ENCODE measurements at regions of chr1 and their contacts with region 1.

Region 1: GRCh38 chr1:92960395-92961130 is 699 bp downstream of the DIPK1A start:
- DNase-seq: peak; percentile 74 to 80
- ATAC-seq: peak; percentile 76 to 85
- H3K4me3 ChIP-seq: peak overlapping the region; percentile 97
- H3K27ac ChIP-seq: peak overlapping the region; percentile 98 to 99
- H3K4me1 ChIP-seq: peaks cover 30% of the 10 kb centered on the region
- CTCF ChIP-seq: peak; percentile 57
- EP300 ChIP-seq: no peak
- POLR2A ChIP-seq: no peak
- RAD21 ChIP-seq: peak; percentile 75 to 80

Region 2: DNA sequence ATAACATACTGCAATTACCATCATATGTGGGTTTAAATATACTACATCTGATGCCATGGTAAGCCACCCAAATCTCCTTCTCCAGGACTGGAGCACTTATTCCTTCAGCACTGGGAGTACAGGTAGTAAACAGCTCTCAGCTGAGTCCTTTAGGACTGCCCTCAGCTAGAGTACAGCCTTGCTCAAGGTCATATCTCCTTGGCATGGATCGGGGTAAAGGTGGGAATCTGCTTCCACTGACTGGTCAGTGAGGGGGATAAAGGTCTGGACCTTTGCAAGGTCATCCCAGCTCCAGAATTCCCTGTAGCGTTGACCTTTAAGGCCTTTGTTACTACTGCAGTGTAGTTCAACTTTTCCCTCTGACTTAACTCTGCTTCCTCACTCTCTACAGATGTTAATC is 90.0 kb before region 1 on chr1:
- CTCF ChIA-PET with region 1: interaction called, 14 read pairs
- POLR2A ChIA-PET with region 1: no interaction called
- DNase-seq: no peak
- ATAC-seq: no peak
- H3K4me3 ChIP-seq: no peak overlapping the region
- H3K27ac ChIP-seq: no peak overlapping the region
- H3K4me1 ChIP-seq: no peaks in the 10 kb centered on the region
- CTCF ChIP-seq: no peak
- EP300 ChIP-seq: no peak
- POLR2A ChIP-seq: no peak
- RAD21 ChIP-seq: no peak

Region 3: DNA sequence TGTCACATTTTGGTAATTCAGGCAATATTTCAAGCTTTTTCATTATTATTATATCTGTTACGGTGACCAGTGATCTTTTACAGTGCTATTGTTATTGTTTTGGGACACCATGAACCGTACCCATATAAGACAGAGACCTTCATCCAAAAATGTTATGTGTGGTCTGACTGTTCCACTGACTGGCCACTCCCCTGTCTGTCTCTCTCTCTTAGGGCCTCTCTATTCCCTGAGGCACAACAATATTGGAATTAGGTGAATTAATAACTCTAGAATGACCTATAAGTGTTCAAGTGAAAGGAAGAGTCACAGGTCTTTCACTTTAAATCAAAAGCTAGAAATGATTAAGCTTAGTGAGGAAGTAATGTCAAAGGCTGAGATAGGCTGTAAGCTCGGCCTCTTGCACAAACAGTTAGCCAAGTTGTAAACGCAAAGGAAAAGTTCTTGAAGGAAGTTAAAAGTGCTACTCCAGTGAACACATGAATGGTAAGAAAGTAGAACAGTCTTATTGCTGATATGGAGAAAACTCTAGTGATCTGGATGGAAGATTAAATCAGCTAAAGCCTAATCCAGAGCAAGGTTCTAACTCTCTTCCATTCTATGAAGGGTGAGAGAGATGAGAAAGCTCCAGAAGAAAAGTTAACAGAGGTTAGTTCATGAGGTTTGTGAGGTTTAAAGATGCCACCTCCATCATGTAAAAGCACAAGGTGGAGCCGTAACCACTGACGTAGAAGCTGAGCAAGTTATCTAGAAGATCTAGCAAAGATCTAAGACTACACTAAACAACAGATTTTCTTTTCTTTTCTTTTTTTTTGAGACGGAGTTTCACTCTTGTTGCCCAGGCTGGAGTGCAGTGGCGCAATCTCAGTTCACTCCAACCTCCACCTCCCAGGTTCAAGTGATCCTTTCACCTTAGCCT is 20.4 kb after region 1 on chr1:
- CTCF ChIA-PET with region 1: interaction called, 10 read pairs
- POLR2A ChIA-PET with region 1: interaction called, 3 read pairs
- DNase-seq: no peak
- ATAC-seq: no peak
- H3K4me3 ChIP-seq: no peak overlapping the region
- H3K27ac ChIP-seq: no peak overlapping the region
- H3K4me1 ChIP-seq: no peaks in the 10 kb centered on the region
- CTCF ChIP-seq: no peak
- EP300 ChIP-seq: no peak
- POLR2A ChIP-seq: no peak
- RAD21 ChIP-seq: no peak

Region 4: GRCh38 chr1:93078986-93079654 is 118.6 kb after region 1 on chr1 and contains the start of gene MTF2:
- CTCF ChIA-PET with region 1: no interaction called
- POLR2A ChIA-PET with region 1: interaction called, 13 read pairs
- DNase-seq: peak; percentile 73 to 96
- ATAC-seq: peak; percentile 92
- H3K4me3 ChIP-seq: peak within 1 kb of the TSS; percentile 86
- H3K27ac ChIP-seq: peak within 1 kb of the TSS; percentile 88 to 96
- H3K4me1 ChIP-seq: peaks cover 19% of the 10 kb centered on the region; the same call in 2 of the 3 replicates
- CTCF ChIP-seq: no peak
- EP300 ChIP-seq: peak in 1 of 2 experiments; percentile 30; a peak in 1 of 5 replicates
- POLR2A ChIP-seq: peak; percentile 93
- RAD21 ChIP-seq: no peak; a peak in 1 of 5 replicates
- polyA plus RNA-seq, gene MTF2: 29.5 and 31.2 TPM in 2 replicates

Measured in A549 (cell line).